PC-3 (cell line): ENCODE measurements at regions of chr3 and their contacts with region 1.

Region 1: GRCh38 chr3:153061938-153062528 is 100.0 kb upstream of the RAP2B start:
- DNase-seq: no peak
- ATAC-seq: no peak
- H3K4me3 ChIP-seq: no peak overlapping the region
- H3K27ac ChIP-seq: no peak overlapping the region
- H3K4me1 ChIP-seq: peaks cover 18% of the 10 kb centered on the region
- H3K27me3 ChIP-seq: no peaks in the 10 kb centered on the region
- CTCF ChIP-seq: no peak

Region 2: DNA sequence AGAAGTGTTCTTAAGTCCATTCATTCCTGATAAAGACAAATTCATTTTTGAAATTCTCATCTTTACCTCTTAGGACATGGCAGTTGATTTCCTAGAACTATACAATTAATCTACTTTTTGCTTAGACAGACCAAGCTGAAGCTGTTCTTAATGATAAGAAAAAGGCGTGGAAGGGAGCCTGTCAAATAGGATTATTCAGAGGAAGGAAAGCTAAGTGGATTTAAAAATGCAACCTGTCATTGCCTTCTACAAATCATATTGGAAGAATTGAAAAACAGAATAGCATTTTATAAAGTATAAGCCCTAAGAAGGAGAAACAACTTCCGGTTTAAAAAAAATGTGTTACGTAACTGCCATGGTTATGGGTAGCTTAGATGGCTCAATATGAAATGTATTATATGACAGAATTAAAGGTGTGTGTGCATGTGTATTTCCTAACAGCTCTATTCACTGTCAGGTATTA is 18.8 kb after region 1 on chr3:
- CTCF ChIA-PET with region 1: no interaction called
- POLR2A ChIA-PET with region 1: no interaction called
- intact Hi-C with region 1: loop called (anchors 2 kb)
- DNase-seq: no peak
- ATAC-seq: no peak
- H3K4me3 ChIP-seq: no peak overlapping the region
- H3K27ac ChIP-seq: no peak overlapping the region
- H3K4me1 ChIP-seq: 0 out of 2 replicates have a peak, but pooled peaks cover 5% of the 10 kb centered on the region
- H3K27me3 ChIP-seq: no peaks in the 10 kb centered on the region
- CTCF ChIP-seq: no peak

Region 3: GRCh38 chr3:153463895-153464294 is 401.9 kb after region 1 on chr3:
- CTCF ChIA-PET with region 1: no interaction called
- POLR2A ChIA-PET with region 1: no interaction called
- intact Hi-C with region 1: no loop called
- DNase-seq: no peak
- ATAC-seq: no peak
- H3K4me3 ChIP-seq: no peak overlapping the region
- H3K27ac ChIP-seq: no peak overlapping the region
- H3K4me1 ChIP-seq: no peaks in the 10 kb centered on the region
- H3K27me3 ChIP-seq: no peaks in the 10 kb centered on the region
- CTCF ChIP-seq: no peak